Naive thymus-derived CD4-positive, alpha-beta T cell (primary cell): ENCODE measurements at regions of chr10 and their contacts with region 1.

Region 1: GRCh38 chr10:26334932-26335573 is 103.1 kb upstream of the APBB1IP start:
- DNase-seq: peak; percentile 46 to 78 (median 70)
- ATAC-seq: peak; percentile 93
- H3K4me3 ChIP-seq: peak overlapping the region; percentile 43
- H3K4me3 Mint-ChIP-seq: peak overlapping the region; percentile 53 to 92 (median 86)
- H3K27ac ChIP-seq: no peak overlapping the region
- H3K27ac Mint-ChIP-seq: peak overlapping the region in 7 of 9 donors; percentile 2 to 83 (median 60)
- H3K4me1 ChIP-seq: no peaks in the 10 kb centered on the region
- H3K4me1 Mint-ChIP-seq: peaks cover 0 to 12% (median 2%) of the 10 kb centered on the region in 7 donors
- H3K27me3 ChIP-seq: no peaks in the 10 kb centered on the region
- H3K27me3 Mint-ChIP-seq: peaks cover 0 to 2% (median 0%) of the 10 kb centered on the region in 5 donors

Region 2: GRCh38 chr10:25561758-25562157 is 773.3 kb before region 1 on chr10:
- CTCF ChIA-PET with region 1: no interaction called
- POLR2A ChIA-PET with region 1: no interaction called
- intact Hi-C with region 1: no loop called
- DNase-seq: no peak
- ATAC-seq: no peak
- H3K4me3 ChIP-seq: no peak overlapping the region
- H3K4me3 Mint-ChIP-seq: no peak overlapping the region
- H3K27ac ChIP-seq: no peak overlapping the region
- H3K27ac Mint-ChIP-seq: no peak overlapping the region
- H3K4me1 ChIP-seq: no peaks in the 10 kb centered on the region
- H3K4me1 Mint-ChIP-seq: no peaks in the 10 kb centered on the region
- H3K27me3 ChIP-seq: no peaks in the 10 kb centered on the region
- H3K27me3 Mint-ChIP-seq: peaks cover 0 to 5% (median 0%) of the 10 kb centered on the region in 5 donors

Region 3: GRCh38 chr10:26468700-26469099 is 133.6 kb after region 1 on chr10:
- CTCF ChIA-PET with region 1: interaction called, 4 read pairs
- POLR2A ChIA-PET with region 1: no interaction called
- intact Hi-C with region 1: loop called in 1 of 2 experiments (anchors 1 kb)
- DNase-seq: peak in 8 of 9 donors; percentile 20 to 82 (median 76)
- ATAC-seq: peak; percentile 94
- H3K4me3 ChIP-seq: peak overlapping the region; percentile 1
- H3K4me3 Mint-ChIP-seq: peak overlapping the region; percentile 66 to 93 (median 84)
- H3K27ac ChIP-seq: peak overlapping the region; percentile 33
- H3K27ac Mint-ChIP-seq: peak overlapping the region; percentile 83 to 96 (median 91)
- H3K4me1 ChIP-seq: peaks cover 64 to 76% of the 10 kb centered on the region in 2 donors
- H3K4me1 Mint-ChIP-seq: peaks cover 61 to 100% (median 92%) of the 10 kb centered on the region in 7 donors
- H3K27me3 ChIP-seq: no peaks in the 10 kb centered on the region
- H3K27me3 Mint-ChIP-seq: no peaks in the 10 kb centered on the region

Region 4: DNA sequence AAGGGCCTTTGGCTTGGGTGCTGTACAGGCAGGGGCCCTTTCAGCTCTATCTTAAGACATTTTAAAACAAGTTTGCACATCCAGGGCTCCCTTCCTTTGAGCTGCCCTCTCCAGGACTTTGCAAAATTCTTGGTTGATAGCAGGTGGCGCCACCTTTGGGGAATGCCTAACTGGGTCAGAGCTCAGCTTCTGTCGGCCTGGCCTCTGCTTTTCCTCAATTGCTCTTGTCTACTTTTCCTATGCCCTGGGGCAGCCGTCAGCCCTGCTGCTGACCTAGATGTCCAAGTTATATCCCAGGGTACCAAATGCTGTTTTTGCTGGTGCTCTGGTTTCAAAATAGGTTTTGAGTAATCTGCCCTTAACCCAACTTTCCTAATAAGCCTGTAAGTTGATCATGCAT is 168.9 kb after region 1 on chr10:
- CTCF ChIA-PET with region 1: interaction called, 4 read pairs
- POLR2A ChIA-PET with region 1: no interaction called
- intact Hi-C with region 1: loop called (anchors 1 kb)
- DNase-seq: peak in 2 of 9 donors; percentile 7 to 34
- ATAC-seq: peak; percentile 38
- H3K4me3 ChIP-seq: no peak overlapping the region
- H3K4me3 Mint-ChIP-seq: no peak overlapping the region
- H3K27ac ChIP-seq: no peak overlapping the region
- H3K27ac Mint-ChIP-seq: peak overlapping the region in 8 of 9 donors; percentile 6 to 86 (median 50)
- H3K4me1 ChIP-seq: no peaks in the 10 kb centered on the region
- H3K4me1 Mint-ChIP-seq: peaks cover 5 to 63% (median 51%) of the 10 kb centered on the region in 7 donors
- H3K27me3 ChIP-seq: no peaks in the 10 kb centered on the region
- H3K27me3 Mint-ChIP-seq: no peaks in the 10 kb centered on the region

Region 5: DNA sequence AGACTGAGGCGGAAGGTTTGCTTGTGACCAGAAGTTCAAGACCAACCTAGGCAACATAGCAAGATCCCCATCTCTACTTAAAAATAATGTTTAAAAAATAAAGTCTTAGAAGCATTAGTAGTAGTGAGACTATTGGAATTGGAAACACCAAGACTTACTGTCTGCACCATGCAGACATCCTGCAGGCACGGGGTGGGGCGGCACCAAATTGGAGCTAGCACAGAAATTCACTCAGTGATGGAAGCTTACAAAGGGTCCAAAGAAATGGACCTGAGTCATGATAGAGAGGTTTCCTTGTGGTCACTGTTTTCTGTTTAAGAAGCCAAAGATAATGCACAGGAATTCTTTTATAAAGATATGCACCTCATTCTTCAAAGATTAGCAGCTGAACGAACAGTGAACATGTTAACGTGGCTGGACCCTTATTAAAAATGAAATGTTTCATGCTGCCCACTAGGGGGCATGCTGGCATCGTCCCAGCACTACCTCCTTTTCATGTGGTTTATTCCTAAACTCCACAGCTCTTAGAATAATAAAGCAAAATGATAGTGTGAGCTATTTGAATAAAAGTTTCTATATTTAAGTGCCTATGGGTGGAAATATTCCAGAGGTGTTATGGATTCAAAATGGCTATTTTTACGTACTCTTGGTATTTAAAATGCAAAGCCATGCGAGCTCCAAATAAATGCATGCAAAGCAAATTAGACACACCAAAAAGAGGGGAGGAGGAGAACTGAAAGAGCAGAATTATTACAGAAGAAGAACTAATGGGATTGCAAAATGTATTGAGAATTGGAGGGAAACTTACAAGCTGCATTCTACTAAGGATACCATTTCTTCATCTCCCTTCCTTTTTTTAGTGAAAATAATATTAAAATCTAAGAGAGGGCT is 391.0 kb after region 1 on chr10:
- CTCF ChIA-PET with region 1: no interaction called
- POLR2A ChIA-PET with region 1: no interaction called
- intact Hi-C with region 1: loop called (anchors 1 to 2 kb)
- DNase-seq: peak; percentile 16 to 57 (median 45)
- ATAC-seq: peak; percentile 74
- H3K4me3 ChIP-seq: no peak overlapping the region
- H3K4me3 Mint-ChIP-seq: no peak overlapping the region
- H3K27ac ChIP-seq: no peak overlapping the region
- H3K27ac Mint-ChIP-seq: peak overlapping the region in 1 of 9 donors; percentile 29
- H3K4me1 ChIP-seq: peaks cover 0 to 13% of the 10 kb centered on the region in 2 donors
- H3K4me1 Mint-ChIP-seq: peaks cover 0 to 15% (median 6%) of the 10 kb centered on the region in 7 donors
- H3K27me3 ChIP-seq: no peaks in the 10 kb centered on the region
- H3K27me3 Mint-ChIP-seq: no peaks in the 10 kb centered on the region

Region 6: DNA sequence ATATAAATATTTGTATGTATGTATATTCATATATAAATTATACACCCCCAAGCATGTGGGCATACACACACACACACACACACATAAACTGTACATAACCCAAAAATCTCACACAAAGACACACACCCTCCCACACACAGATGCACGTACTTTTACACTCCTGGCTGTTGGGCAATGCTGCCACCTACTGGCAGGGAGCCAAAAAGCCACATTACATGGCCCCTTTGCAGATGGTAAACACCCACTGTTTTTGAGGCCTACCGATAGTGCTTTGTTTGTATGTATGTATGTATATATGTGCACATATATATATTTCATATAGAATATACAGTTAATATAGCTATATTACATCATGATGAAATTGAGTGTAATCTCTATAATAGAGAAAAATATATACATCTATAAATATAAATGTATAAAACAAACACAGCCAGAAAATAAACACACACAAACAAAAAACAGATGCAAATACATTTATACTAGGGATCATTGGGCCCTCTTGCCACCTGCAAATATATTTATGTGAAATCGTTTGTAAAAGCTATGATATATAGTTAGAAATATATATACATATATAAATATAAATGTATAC is 1025.6 kb after region 1 on chr10:
- CTCF ChIA-PET with region 1: no interaction called
- POLR2A ChIA-PET with region 1: no interaction called
- intact Hi-C with region 1: loop called (anchors 1 kb)
- DNase-seq: peak; percentile 67 to 85 (median 81)
- ATAC-seq: peak; percentile 97
- H3K4me3 ChIP-seq: no peak overlapping the region
- H3K4me3 Mint-ChIP-seq: no peak overlapping the region
- H3K27ac ChIP-seq: no peak overlapping the region
- H3K27ac Mint-ChIP-seq: no peak overlapping the region
- H3K4me1 ChIP-seq: no peaks in the 10 kb centered on the region
- H3K4me1 Mint-ChIP-seq: no peaks in the 10 kb centered on the region
- H3K27me3 ChIP-seq: no peaks in the 10 kb centered on the region
- H3K27me3 Mint-ChIP-seq: no peaks in the 10 kb centered on the region